ENCODE measurements at regions of chr15 and their contacts with region 1.

Region 1: DNA sequence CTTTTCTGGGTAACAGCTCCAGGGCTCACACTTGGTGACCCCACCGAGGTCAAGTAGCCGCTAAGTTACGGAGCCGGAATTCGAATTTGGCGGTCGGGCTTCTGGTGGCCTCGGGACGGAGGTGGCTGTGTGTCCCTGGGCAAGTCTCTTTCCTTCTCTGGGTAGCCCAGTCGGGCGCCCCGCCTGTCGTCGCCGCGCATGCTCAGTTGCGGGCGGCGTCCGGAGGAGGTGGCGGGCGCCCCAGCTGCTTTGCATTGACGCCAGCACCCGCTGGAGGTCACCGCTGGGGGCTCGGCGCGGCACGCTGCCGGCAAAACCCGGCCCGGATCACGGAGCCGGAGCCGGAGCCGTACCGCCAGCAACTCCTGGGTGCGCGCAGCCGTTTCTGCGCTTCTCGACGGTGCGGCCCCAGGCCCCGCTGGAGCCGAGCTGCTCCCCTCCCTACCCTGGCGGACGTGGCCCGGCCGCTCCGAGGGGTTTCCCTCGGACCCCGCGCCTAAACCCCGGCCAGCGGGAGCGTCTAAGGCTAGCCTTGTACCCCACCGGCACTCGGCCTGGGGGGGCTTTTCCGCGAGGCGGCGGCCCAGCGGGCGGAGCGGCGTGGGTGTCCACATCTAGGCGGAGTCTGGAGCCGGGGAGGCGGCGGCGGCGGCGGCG is 474 bp upstream of the PDE8A start:
- DNase-seq: peak; percentile 98

Region 2: DNA sequence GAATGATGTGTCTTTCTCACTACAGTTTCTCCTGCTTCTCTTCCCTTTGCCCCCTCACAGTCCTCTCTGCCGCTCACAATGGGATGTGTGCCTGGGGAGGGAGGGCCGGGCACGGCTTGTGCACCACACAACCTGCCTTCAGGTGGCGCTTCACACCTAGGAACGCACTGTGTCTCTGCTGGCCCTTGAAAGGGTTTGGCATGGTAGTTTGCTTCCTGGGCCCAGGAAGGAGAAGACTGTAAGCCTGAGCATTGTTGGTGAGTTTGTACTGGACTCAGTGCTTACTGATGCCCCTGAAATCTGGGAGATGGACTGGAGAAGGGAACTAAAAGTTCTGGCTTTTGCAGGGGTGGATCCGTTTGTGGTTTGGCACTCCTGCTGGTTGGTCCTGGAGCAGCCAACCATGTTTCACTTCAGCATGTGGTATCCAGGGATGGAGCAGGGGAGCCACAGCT is 154.8 kb before region 1 on chr15:
- intact Hi-C with region 1: no loop called
- DNase-seq: no peak

Region 3: GRCh38 chr15:84955089-84955848 is 25.9 kb before region 1 on chr15:
- intact Hi-C with region 1: loop called (anchors 2 kb)
- DNase-seq: no peak

Region 4: GRCh38 chr15:85010386-85011159 is 29.4 kb after region 1 on chr15:
- intact Hi-C with region 1: no loop called
- DNase-seq: no peak

Region 5: DNA sequence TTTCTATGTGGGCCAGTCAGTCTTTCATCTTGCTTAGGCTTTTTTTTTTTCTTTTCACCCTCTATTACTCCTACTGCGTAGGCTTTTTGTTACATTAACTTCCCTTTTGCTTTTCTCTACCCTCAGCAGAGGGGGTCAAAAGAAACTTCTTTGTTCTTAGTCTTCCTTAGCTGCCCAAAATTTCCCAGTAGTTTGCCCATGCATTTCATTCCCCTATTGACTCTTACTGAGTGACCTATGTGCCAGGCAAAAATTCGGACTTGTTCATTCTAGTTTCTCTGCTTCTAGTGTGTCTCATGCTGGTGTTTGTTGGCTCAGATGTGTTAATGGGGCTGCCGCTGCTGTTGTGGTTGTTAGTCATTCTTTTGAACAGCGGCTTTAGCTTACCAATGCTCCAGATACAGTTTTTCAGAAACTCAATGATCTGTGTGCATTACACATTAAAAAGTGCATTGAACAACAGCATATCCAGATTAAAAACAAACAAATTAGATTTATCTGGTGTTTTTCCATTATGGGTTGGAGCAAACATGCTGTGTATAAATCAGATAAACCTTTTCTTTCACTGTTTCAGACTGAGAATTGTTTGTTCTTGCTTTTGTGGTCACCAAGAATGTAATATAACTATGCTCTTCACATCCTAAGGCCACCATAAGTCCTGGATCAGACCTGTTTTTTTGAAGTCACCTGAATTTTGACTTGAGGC is 43.5 kb after region 1 on chr15:
- intact Hi-C with region 1: loop called (anchors 5 kb)
- DNase-seq: no peak

Region 6: GRCh38 chr15:85044251-85044853 is 63.2 kb after region 1 on chr15:
- intact Hi-C with region 1: loop called (anchors 5 kb)
- DNase-seq: no peak

Measured in cardiac septum (tissue), 1 donor.